ENCODE measurements at regions of chr1 and their contacts with region 1.

Region 1: DNA sequence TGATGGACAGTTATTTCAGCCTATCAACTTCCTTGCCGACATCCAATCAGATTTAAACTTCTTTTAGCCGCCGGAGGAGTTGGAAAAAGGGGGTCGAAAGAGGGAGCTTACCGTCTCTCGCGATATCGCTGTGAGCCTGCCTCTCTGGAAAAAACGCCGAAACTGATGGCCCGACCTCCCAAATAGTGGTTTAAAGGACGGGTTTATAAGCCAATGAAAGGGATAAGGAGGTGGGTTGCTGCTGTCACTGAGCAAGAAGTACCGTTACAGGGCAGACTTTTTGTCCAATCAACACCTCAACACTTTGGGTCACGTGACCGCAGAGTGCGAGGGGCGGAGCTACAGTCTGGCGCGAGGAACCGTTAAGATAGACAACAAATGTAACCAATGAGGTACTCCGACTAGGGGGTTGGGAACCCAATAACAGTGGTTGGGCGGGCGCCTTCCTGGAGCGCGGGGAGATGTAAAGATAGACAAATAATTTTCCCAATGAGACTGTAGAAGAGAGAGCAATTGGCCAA is at the start of gene RBM15:
- DNase-seq: peak; percentile 77 to 100 (median 99)
- ATAC-seq: peak; percentile 84
- H3K4me3 ChIP-seq: peak within 1 kb of the TSS; percentile 94
- H3K4me3 Mint-ChIP-seq: no peak within 1 kb of the TSS
- H3K27ac ChIP-seq: peak within 1 kb of the TSS; percentile 96
- H3K27ac Mint-ChIP-seq: peak within 1 kb of the TSS in 1 of 9 donors; percentile 97
- H3K4me1 ChIP-seq: peaks cover 40 to 41% of the 10 kb centered on the region in 2 donors
- H3K4me1 Mint-ChIP-seq: peaks cover 37 to 64% (median 61%) of the 10 kb centered on the region in 7 donors
- H3K27me3 ChIP-seq: no peaks in the 10 kb centered on the region
- H3K27me3 Mint-ChIP-seq: peaks cover 0 to 2% (median 0%) of the 10 kb centered on the region in 5 donors
- total RNA-seq, gene RBM15: 36.4 to 58.6 (median 46.3) TPM

Region 2: GRCh38 chr1:108533351-108534083 is 1805.4 kb before region 1 on chr1:
- CTCF ChIA-PET with region 1: no interaction called
- POLR2A ChIA-PET with region 1: no interaction called
- intact Hi-C with region 1: no loop called
- DNase-seq: no peak
- ATAC-seq: no peak
- H3K4me3 ChIP-seq: no peak overlapping the region
- H3K4me3 Mint-ChIP-seq: no peak overlapping the region
- H3K27ac ChIP-seq: no peak overlapping the region
- H3K27ac Mint-ChIP-seq: no peak overlapping the region
- H3K4me1 ChIP-seq: no peaks in the 10 kb centered on the region
- H3K4me1 Mint-ChIP-seq: peaks cover 0 to 2% (median 0%) of the 10 kb centered on the region in 7 donors
- H3K27me3 ChIP-seq: no peaks in the 10 kb centered on the region
- H3K27me3 Mint-ChIP-seq: peaks cover 3 to 25% (median 6%) of the 10 kb centered on the region in 5 donors

Region 3: DNA sequence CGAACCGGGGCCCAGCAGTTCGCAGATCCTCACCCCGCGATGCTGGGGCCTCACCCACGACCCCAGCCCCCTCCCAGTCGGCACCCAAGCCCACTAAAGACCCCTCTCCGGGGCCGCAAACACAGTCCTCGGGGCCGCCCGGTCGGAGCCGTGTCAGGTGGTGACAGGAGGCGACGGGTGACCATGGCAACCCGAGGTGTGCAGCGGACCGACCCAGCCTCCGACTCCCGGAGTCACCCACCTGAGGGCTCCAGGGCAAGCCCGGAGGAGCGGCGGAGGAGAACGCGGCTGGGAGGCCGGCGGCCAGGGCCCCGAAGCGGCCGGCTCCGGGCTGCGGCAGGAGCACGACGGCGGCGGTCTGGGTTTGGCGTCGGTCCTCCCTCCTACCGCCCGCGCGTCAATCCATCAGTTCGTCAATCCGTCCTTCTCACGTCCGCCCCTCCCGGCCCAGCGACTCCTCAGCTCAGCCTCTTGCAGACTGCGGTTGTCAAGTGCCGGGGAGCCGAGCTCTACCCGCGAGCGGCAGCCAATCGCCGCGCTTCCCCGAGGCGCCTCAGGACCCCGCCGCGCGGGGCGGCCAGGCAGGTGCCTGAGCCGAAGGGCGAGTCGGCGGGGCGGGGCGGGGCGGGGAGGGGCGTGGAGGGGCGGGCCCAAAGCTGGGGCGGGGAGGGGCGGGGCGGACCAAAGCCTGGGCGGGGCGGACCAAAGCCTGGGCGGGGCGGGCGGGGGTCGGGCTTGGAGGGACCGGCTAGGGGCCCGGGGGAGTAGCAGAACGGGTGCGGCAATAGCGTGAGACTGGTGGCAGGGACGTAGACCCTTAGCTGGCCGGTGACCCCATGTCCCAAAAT is 1297.1 kb before region 1 on chr1 and contains the start of gene WDR47:
- CTCF ChIA-PET with region 1: no interaction called
- POLR2A ChIA-PET with region 1: no interaction called
- intact Hi-C with region 1: loop called in 1 of 2 experiments (anchors 2 kb)
- DNase-seq: peak; percentile 95 to 97 (median 96)
- ATAC-seq: peak; percentile 99
- H3K4me3 ChIP-seq: peak within 1 kb of the TSS; percentile 97
- H3K4me3 Mint-ChIP-seq: peak within 1 kb of the TSS; percentile 86 to 97 (median 94)
- H3K27ac ChIP-seq: peak within 1 kb of the TSS; percentile 90
- H3K27ac Mint-ChIP-seq: peak within 1 kb of the TSS; percentile 78 to 97 (median 91)
- H3K4me1 ChIP-seq: peaks cover 0 to 7% of the 10 kb centered on the region in 2 donors
- H3K4me1 Mint-ChIP-seq: peaks cover 7 to 25% (median 16%) of the 10 kb centered on the region in 7 donors
- H3K27me3 ChIP-seq: no peaks in the 10 kb centered on the region
- H3K27me3 Mint-ChIP-seq: peaks cover 0 to 7% (median 0%) of the 10 kb centered on the region in 5 donors
- total RNA-seq, gene WDR47: 9.8 to 15.4 (median 14.4) TPM

Region 4: DNA sequence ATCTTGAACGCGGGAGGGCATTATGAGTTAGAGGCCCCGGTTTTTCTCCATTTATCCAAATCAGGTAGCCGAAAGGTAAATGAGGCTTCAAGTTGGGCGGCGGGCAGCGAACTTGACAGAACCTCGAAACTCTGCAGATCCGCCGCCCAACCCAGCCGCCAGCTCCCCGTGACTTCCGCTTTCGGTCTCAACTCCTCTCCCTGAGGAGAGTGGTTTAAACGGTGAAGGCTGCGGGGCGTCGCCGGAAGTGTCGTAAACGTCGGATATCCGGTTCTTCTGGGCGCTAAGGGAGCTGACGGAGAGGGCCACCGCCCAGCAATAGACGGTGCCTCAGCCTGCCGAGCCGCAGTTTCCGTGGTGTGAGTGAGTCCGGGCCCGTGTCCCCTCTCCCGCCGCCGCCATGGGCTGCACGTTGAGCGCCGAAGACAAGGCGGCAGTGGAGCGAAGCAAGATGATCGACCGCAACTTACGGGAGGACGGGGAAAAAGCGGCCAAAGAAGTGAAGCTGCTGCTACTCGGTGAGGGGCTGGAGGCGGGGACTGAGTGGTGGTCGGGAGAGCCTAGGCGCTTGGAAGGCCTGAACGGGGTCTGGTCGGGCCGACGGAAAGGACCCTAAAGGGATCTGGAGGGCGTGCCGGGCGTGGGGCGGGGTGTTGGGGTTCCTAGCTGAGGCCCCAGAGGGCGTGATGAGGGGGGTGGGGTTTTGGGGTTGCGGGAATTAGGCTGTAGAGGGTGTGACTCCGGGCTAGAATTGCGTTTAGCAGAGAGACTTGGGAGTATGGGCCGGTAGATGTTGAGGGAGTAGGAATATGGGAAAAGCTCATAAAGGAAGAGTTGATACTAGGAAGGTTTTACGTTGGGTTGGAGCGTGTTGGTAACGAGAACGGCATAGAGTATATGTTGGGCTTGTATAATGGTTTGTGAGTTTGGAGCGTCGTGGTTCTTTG is 790.4 kb before region 1 on chr1 and contains the start of gene GNAI3:
- CTCF ChIA-PET with region 1: no interaction called
- POLR2A ChIA-PET with region 1: no interaction called
- intact Hi-C with region 1: loop called in 1 of 2 experiments (anchors 2 kb)
- DNase-seq: peak; percentile 78 to 97 (median 95)
- ATAC-seq: peak; percentile 96
- H3K4me3 ChIP-seq: peak within 1 kb of the TSS; percentile 89
- H3K4me3 Mint-ChIP-seq: peak within 1 kb of the TSS; percentile 90 to 99 (median 97)
- H3K27ac ChIP-seq: peak within 1 kb of the TSS; percentile 93
- H3K27ac Mint-ChIP-seq: peak within 1 kb of the TSS; percentile 89 to 100 (median 99)
- H3K4me1 ChIP-seq: peaks cover 25 to 27% of the 10 kb centered on the region in 2 donors
- H3K4me1 Mint-ChIP-seq: peaks cover 30 to 75% (median 55%) of the 10 kb centered on the region in 7 donors
- H3K27me3 ChIP-seq: no peaks in the 10 kb centered on the region
- H3K27me3 Mint-ChIP-seq: no peaks in the 10 kb centered on the region
- total RNA-seq, gene GNAI3: 4.9 to 9.3 (median 7.0) TPM

Region 5: GRCh38 chr1:110209715-110210603 is 129.0 kb before region 1 on chr1 and contains the start of gene KCNC4:
- CTCF ChIA-PET with region 1: interaction called, 36 read pairs
- POLR2A ChIA-PET with region 1: interaction called, 118 read pairs
- intact Hi-C with region 1: loop called (anchors 1 kb)
- DNase-seq: peak; percentile 80 to 93 (median 91)
- ATAC-seq: peak; percentile 93
- H3K4me3 ChIP-seq: peak within 1 kb of the TSS; percentile 72
- H3K4me3 Mint-ChIP-seq: peak within 1 kb of the TSS; percentile 86 to 94 (median 88)
- H3K27ac ChIP-seq: peak within 1 kb of the TSS; percentile 89
- H3K27ac Mint-ChIP-seq: peak within 1 kb of the TSS; percentile 88 to 98 (median 95)
- H3K4me1 ChIP-seq: peaks cover 7 to 20% of the 10 kb centered on the region in 2 donors
- H3K4me1 Mint-ChIP-seq: peaks cover 31 to 61% (median 42%) of the 10 kb centered on the region in 7 donors
- H3K27me3 ChIP-seq: no peaks in the 10 kb centered on the region
- H3K27me3 Mint-ChIP-seq: peaks cover 0 to 16% (median 0%) of the 10 kb centered on the region in 5 donors
- total RNA-seq, gene KCNC4: 5.8 to 18.2 (median 12.4) TPM

Region 6: GRCh38 chr1:110674337-110675059 is 335.6 kb after region 1 on chr1 and contains the start of gene KCNA3:
- CTCF ChIA-PET with region 1: no interaction called
- POLR2A ChIA-PET with region 1: no interaction called
- intact Hi-C with region 1: loop called (anchors 1 to 2 kb)
- DNase-seq: peak; percentile 52 to 74 (median 63)
- ATAC-seq: peak; percentile 54
- H3K4me3 ChIP-seq: peak within 1 kb of the TSS; percentile 97
- H3K4me3 Mint-ChIP-seq: peak within 1 kb of the TSS; percentile 55 to 100 (median 99)
- H3K27ac ChIP-seq: peak within 1 kb of the TSS; percentile 88
- H3K27ac Mint-ChIP-seq: peak within 1 kb of the TSS; percentile 93 to 100 (median 100)
- H3K4me1 ChIP-seq: peaks cover 5% of the 10 kb centered on the region in 2 donors
- H3K4me1 Mint-ChIP-seq: peaks cover 27 to 60% (median 55%) of the 10 kb centered on the region in 7 donors
- H3K27me3 ChIP-seq: no peaks in the 10 kb centered on the region
- H3K27me3 Mint-ChIP-seq: peaks cover 0 to 2% (median 0%) of the 10 kb centered on the region in 5 donors
- total RNA-seq, gene KCNA3: 74.1 to 115 (median 108) TPM

Region 7: GRCh38 chr1:111222308-111223125 is 883.6 kb after region 1 on chr1:
- CTCF ChIA-PET with region 1: no interaction called
- POLR2A ChIA-PET with region 1: no interaction called
- intact Hi-C with region 1: loop called in 1 of 2 experiments (anchors 5 kb)
- DNase-seq: peak in 8 of 9 donors; percentile 51 to 83 (median 62)
- ATAC-seq: peak; percentile 62
- H3K4me3 ChIP-seq: peak overlapping the region; percentile 55
- H3K4me3 Mint-ChIP-seq: peak overlapping the region; percentile 77 to 92 (median 84)
- H3K27ac ChIP-seq: peak overlapping the region; percentile 77
- H3K27ac Mint-ChIP-seq: peak overlapping the region; percentile 85 to 100 (median 97)
- H3K4me1 ChIP-seq: peaks cover 92% of the 10 kb centered on the region in 2 donors
- H3K4me1 Mint-ChIP-seq: peaks cover 78 to 100% (median 97%) of the 10 kb centered on the region in 7 donors
- H3K27me3 ChIP-seq: no peaks in the 10 kb centered on the region
- H3K27me3 Mint-ChIP-seq: no peaks in the 10 kb centered on the region

Measured in naive thymus-derived CD4-positive, alpha-beta T cell (primary cell).